ENCODE measurements at regions of chr4 and their contacts with region 1.

Region 1: GRCh38 chr4:167021545-167022155 is 212.6 kb downstream of the SPOCK3 start:
- DNase-seq: peak; percentile 34 to 87
- H3K4me3 ChIP-seq: no peak overlapping the region
- H3K27ac ChIP-seq: no peak overlapping the region
- H3K4me1 ChIP-seq: no peaks in the 10 kb centered on the region; a peak in 1 of 7 replicates
- H3K27me3 ChIP-seq: no peaks in the 10 kb centered on the region
- CTCF ChIP-seq: peak; percentile 39 to 77 (median 70)
- EP300 ChIP-seq: no peak
- POLR2A ChIP-seq: no peak
- RAD21 ChIP-seq: peak; percentile 79 to 86

Region 2: GRCh38 chr4:167034983-167035382 is 13.3 kb after region 1 on chr4:
- CTCF ChIA-PET with region 1: interaction called, 15 read pairs
- POLR2A ChIA-PET with region 1: no interaction called
- DNase-seq: no peak
- H3K4me3 ChIP-seq: no peak overlapping the region
- H3K27ac ChIP-seq: no peak overlapping the region
- H3K4me1 ChIP-seq: no peaks in the 10 kb centered on the region
- H3K27me3 ChIP-seq: no peaks in the 10 kb centered on the region
- CTCF ChIP-seq: no peak
- EP300 ChIP-seq: no peak
- POLR2A ChIP-seq: no peak
- RAD21 ChIP-seq: no peak